HEK293 (cell line): ENCODE measurements at regions of chr9 and their contacts with region 1.

Region 1: DNA sequence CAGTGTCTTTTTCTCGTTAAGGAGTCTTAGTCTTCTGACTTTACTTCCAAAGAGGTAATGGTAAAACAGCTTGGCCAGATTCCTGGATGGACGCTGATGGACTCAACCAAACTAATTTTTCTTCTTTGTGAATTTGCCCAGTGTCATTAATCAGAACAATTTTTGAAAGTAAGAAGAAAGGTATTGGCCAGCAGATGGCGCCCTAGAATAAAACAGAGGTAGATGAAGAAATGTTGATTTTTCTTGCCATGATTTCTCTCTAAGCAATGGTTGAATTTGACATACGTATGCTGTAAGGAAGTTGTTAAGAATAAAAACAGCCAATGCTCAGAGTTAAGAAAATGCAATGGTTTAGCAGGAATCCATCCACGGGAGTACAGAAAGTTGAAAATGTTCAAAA is 500.0 kb downstream of the DIRAS2 start:
- H3K4me3 ChIP-seq: no peak overlapping the region
- H3K27ac ChIP-seq: no peak overlapping the region
- H3K4me1 ChIP-seq: no peaks in the 10 kb centered on the region
- CTCF ChIP-seq: no peak

Region 2: GRCh38 chr9:89597711-89598625 is 544.6 kb before region 1 on chr9:
- CTCF ChIA-PET with region 1: interaction called, 18 read pairs
- POLR2A ChIA-PET with region 1: no interaction called
- H3K4me3 ChIP-seq: no peak overlapping the region
- H3K27ac ChIP-seq: no peak overlapping the region
- H3K4me1 ChIP-seq: no peaks in the 10 kb centered on the region
- CTCF ChIP-seq: peak; percentile 63

Region 3: DNA sequence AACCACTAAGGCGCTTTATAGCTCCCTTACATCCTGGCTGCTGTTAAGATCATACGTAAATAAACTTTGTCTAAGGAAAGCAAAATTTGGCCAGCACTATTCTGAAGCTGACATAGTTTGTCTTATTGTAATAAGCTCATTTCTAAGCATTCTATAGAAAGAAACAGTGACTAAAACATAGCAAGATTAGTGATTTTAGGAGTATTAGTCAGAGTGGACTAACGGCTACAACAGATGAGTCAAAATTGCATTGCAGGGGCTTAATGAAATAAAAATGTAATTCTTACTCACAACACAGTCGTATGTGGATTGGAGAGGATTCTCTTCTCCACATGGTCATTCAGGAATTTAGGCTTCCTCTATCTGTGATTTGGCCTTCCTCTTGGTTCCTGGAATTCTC is 190.2 kb before region 1 on chr9:
- CTCF ChIA-PET with region 1: no interaction called
- POLR2A ChIA-PET with region 1: no interaction called
- H3K4me3 ChIP-seq: no peak overlapping the region
- H3K27ac ChIP-seq: no peak overlapping the region
- H3K4me1 ChIP-seq: no peaks in the 10 kb centered on the region
- CTCF ChIP-seq: no peak

Region 4: GRCh38 chr9:90169490-90169889 is 26.9 kb after region 1 on chr9:
- CTCF ChIA-PET with region 1: interaction called, 10 read pairs
- POLR2A ChIA-PET with region 1: no interaction called
- H3K4me3 ChIP-seq: no peak overlapping the region
- H3K27ac ChIP-seq: no peak overlapping the region
- H3K4me1 ChIP-seq: no peaks in the 10 kb centered on the region
- CTCF ChIP-seq: no peak

Region 5: GRCh38 chr9:90219548-90220118 is 77.1 kb after region 1 on chr9:
- CTCF ChIA-PET with region 1: interaction called, 14 read pairs
- POLR2A ChIA-PET with region 1: no interaction called
- H3K4me3 ChIP-seq: no peak overlapping the region
- H3K27ac ChIP-seq: no peak overlapping the region
- H3K4me1 ChIP-seq: no peaks in the 10 kb centered on the region
- CTCF ChIP-seq: 0 out of 2 replicates have a peak, but pooled peaks have one; percentile 21